ENCODE measurements at regions of chr1 and their contacts with region 1.

Region 1: GRCh38 chr1:38018864-38019343 is 6.4 kb downstream of the UTP11 start:
- DNase-seq: no peak
- ATAC-seq: peak; percentile 64
- H3K4me3 Mint-ChIP-seq: no peak overlapping the region
- H3K27ac Mint-ChIP-seq: no peak overlapping the region
- H3K4me1 Mint-ChIP-seq: peaks cover 11% of the 10 kb centered on the region
- H3K27me3 Mint-ChIP-seq: no peaks in the 10 kb centered on the region

Region 2: GRCh38 chr1:37890378-37891014 is 128.4 kb before region 1 on chr1:
- CTCF ChIA-PET with region 1: interaction called, 3 read pairs
- POLR2A ChIA-PET with region 1: no interaction called
- intact Hi-C with region 1: loop called in 1 of 2 experiments (anchors 2 kb)
- DNase-seq: no peak
- ATAC-seq: no peak
- H3K4me3 Mint-ChIP-seq: no peak overlapping the region
- H3K27ac Mint-ChIP-seq: no peak overlapping the region
- H3K4me1 Mint-ChIP-seq: no peaks in the 10 kb centered on the region
- H3K27me3 Mint-ChIP-seq: no peaks in the 10 kb centered on the region

Region 3: DNA sequence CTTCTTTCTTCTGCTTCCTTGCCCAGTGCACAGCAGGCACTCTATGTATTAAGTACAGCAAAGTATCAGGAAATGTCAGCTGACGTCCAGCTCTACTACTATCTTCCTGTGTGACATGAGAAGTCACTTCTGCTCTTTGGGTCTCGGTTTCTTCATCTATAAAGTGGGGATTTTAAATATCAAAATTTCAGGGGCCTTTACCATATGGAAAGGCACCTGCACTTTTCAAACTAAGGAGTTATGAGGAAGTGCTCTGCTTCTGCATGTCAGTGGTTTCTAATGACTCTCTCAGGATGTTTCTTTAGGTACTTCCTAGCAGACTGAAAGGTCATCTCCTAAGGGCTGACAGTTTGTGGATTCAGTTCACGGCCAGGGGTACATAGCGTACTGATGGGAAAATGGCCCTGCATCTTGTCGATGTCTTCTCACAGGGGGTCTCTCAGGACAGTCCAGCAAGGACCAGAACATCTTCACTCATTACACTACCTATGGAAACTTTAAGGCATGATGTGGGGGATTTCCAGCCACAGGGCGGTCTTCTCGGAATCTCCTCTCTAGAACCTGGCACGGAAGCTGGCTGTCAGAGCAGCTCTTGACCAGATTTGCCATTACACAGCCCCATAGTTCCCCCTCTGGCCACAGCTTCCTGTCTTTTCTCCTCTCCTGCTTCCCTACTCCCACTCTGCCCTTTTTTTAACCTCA is 117.6 kb before region 1 on chr1:
- CTCF ChIA-PET with region 1: no interaction called
- POLR2A ChIA-PET with region 1: no interaction called
- intact Hi-C with region 1: no loop called
- DNase-seq: no peak
- ATAC-seq: no peak
- H3K4me3 Mint-ChIP-seq: no peak overlapping the region
- H3K27ac Mint-ChIP-seq: peak overlapping the region; percentile 87
- H3K4me1 Mint-ChIP-seq: peaks cover 9% of the 10 kb centered on the region
- H3K27me3 Mint-ChIP-seq: no peaks in the 10 kb centered on the region

Measured in activated CD4-positive, alpha-beta T cell treated with anti-CD3 and anti-CD28 coated beads for 36 hours (primary cell).